Activated CD4-positive, alpha-beta memory T cell treated with anti-CD3 and anti-CD28 coated beads for 36 hours (primary cell): ENCODE measurements at regions of chr3 and their contacts with region 1.

Region 1: DNA sequence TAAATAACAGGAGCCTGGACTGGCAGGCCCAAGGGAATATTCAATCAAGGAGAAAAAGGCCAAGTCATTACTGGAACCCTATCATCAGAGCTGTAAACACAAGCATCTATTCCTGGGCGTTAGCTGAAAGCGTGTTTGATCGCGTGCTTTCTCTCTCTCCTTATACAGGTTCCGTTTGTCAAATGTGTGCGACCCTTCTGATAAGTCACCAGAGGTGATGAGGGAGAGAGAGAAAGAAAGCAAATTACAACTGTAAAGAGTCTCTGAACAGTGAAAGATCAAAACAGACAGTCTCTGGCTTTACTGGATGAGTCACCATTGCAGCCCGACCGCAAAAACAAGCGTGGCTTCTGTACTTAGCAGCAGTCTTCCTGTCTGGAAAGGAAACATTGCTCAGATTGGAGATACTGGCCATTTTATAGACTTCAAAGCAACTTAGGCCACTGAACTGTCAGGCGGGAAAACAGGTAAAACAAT is 39.5 kb upstream of the TPRG1 start:
- DNase-seq: peak; percentile 90
- H3K4me3 Mint-ChIP-seq: peak overlapping the region; percentile 50
- H3K27ac Mint-ChIP-seq: peak overlapping the region; percentile 83
- H3K4me1 Mint-ChIP-seq: peaks cover 26% of the 10 kb centered on the region
- H3K27me3 Mint-ChIP-seq: no peaks in the 10 kb centered on the region

Region 2: GRCh38 chr3:189049438-189050236 is 82.6 kb before region 1 on chr3:
- CTCF ChIA-PET with region 1: no interaction called
- POLR2A ChIA-PET with region 1: no interaction called
- intact Hi-C with region 1: loop called (anchors 2 kb)
- DNase-seq: peak; percentile 43
- H3K4me3 Mint-ChIP-seq: peak overlapping the region; percentile 1
- H3K27ac Mint-ChIP-seq: peak overlapping the region; percentile 47
- H3K4me1 Mint-ChIP-seq: peaks cover 23% of the 10 kb centered on the region
- H3K27me3 Mint-ChIP-seq: no peaks in the 10 kb centered on the region

Region 3: DNA sequence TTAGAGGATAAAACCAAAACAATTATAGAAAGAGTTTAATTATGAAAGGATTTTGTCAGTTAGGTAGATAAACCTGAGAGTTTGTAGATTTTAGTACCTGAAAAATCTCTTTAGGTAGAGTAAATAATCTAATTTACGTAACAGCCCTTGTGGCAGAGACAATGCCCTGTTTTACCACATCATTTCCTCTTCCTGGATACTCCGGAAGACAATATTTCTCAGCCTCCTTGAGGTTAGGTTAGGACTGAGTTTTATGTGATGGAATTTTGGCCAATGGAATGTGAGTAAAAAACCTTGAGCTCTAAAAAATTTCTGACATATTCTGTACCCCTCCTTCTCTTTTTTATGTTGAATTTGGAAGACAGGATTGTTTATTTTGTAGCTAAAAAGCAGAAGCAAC is 11.2 kb before region 1 on chr3:
- CTCF ChIA-PET with region 1: interaction called, 3 read pairs
- POLR2A ChIA-PET with region 1: no interaction called
- intact Hi-C with region 1: loop called (anchors 1 kb)
- DNase-seq: no peak
- H3K4me3 Mint-ChIP-seq: peak overlapping the region; percentile 56
- H3K27ac Mint-ChIP-seq: peak overlapping the region; percentile 55
- H3K4me1 Mint-ChIP-seq: peaks cover 13% of the 10 kb centered on the region
- H3K27me3 Mint-ChIP-seq: no peaks in the 10 kb centered on the region

Region 4: GRCh38 chr3:189142527-189142926 is 10.3 kb after region 1 on chr3:
- CTCF ChIA-PET with region 1: interaction called, 7 read pairs
- POLR2A ChIA-PET with region 1: interaction called, 5 read pairs
- intact Hi-C with region 1: loop called (anchors 1 kb)
- DNase-seq: peak; percentile 58
- H3K4me3 Mint-ChIP-seq: no peak overlapping the region
- H3K27ac Mint-ChIP-seq: no peak overlapping the region
- H3K4me1 Mint-ChIP-seq: peaks cover 32% of the 10 kb centered on the region
- H3K27me3 Mint-ChIP-seq: no peaks in the 10 kb centered on the region

Region 5: GRCh38 chr3:189563866-189564563 is 431.7 kb after region 1 on chr3:
- CTCF ChIA-PET with region 1: no interaction called
- POLR2A ChIA-PET with region 1: no interaction called
- intact Hi-C with region 1: loop called (anchors 1 kb)
- DNase-seq: peak; percentile 74
- H3K4me3 Mint-ChIP-seq: no peak overlapping the region
- H3K27ac Mint-ChIP-seq: no peak overlapping the region
- H3K4me1 Mint-ChIP-seq: peaks cover 12% of the 10 kb centered on the region
- H3K27me3 Mint-ChIP-seq: peaks cover 1% of the 10 kb centered on the region